ENCODE measurements at regions of chr1 and their contacts with region 1.

Region 1: DNA sequence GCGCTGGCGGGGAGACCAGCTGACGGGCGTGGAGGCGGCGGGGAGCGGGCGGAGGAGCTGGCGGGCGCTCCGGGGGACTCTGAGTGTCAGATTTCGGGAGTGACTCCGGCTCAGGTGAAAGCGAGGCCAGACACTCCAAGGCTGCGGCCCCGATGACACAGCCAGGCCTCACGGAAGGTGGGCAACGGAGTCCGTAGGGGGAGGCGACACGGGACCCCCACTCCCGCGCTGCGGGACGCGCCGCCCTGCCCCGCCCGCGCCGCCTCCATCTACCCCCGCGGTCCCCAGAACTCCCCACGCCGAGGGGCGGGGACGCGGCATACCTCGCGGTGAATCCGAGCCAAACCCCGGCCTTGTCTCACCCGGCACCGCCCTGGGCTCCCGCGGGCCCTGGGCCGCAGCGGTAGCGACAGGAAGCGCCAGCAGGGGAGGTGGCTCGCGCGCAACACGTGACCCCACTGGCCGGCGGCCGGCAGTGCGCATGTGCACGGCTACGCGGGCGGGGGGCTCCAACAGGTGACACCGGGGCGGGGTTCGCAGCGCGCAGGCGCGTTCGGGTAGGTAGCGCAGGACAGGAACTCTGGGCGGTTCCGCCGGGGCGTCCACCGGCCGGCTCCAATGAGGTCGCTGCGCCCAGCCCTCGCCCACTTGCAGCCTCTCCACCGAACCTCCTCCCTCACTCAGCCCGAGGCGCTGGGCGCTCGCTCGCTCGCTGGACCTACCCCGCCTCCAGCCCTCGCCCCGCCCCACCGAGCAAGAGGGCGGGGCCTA is at the start of gene CC2D1B:
- DNase-seq: peak; percentile 98 to 100 (median 100)
- H3K4me3 ChIP-seq: peak within 1 kb of the TSS; percentile 53 to 88
- H3K4me3 Mint-ChIP-seq: peak within 1 kb of the TSS; percentile 90 to 97 (median 92)
- H3K27ac ChIP-seq: peak within 1 kb of the TSS; percentile 78
- H3K27ac Mint-ChIP-seq: peak within 1 kb of the TSS; percentile 90 to 97 (median 95)
- H3K4me1 ChIP-seq: peaks cover 32% of the 10 kb centered on the region
- H3K4me1 Mint-ChIP-seq: peaks cover 20 to 56% (median 41%) of the 10 kb centered on the region in 4 donors
- H3K27me3 ChIP-seq: no peaks in the 10 kb centered on the region
- H3K27me3 Mint-ChIP-seq: no peaks in the 10 kb centered on the region
- total RNA-seq, gene CC2D1B: 83.7 to 84.1 TPM

Region 2: GRCh38 chr1:52033190-52034049 is 332.5 kb before region 1 on chr1 and contains the start of gene KTI12:
- CTCF ChIA-PET with region 1: no interaction called
- POLR2A ChIA-PET with region 1: interaction called, 5 read pairs
- intact Hi-C with region 1: loop called (anchors 5 kb)
- DNase-seq: peak; percentile 88 to 92 (median 90)
- H3K4me3 ChIP-seq: peak within 1 kb of the TSS; percentile 80 to 88
- H3K4me3 Mint-ChIP-seq: peak within 1 kb of the TSS; percentile 86 to 96 (median 93)
- H3K27ac ChIP-seq: peak within 1 kb of the TSS; percentile 81
- H3K27ac Mint-ChIP-seq: peak within 1 kb of the TSS; percentile 95 to 99 (median 96)
- H3K4me1 ChIP-seq: peaks cover 33% of the 10 kb centered on the region
- H3K4me1 Mint-ChIP-seq: peaks cover 31 to 45% (median 34%) of the 10 kb centered on the region in 4 donors
- H3K27me3 ChIP-seq: no peaks in the 10 kb centered on the region
- H3K27me3 Mint-ChIP-seq: no peaks in the 10 kb centered on the region
- total RNA-seq, gene KTI12: 14.0 to 15.6 TPM

Region 3: DNA sequence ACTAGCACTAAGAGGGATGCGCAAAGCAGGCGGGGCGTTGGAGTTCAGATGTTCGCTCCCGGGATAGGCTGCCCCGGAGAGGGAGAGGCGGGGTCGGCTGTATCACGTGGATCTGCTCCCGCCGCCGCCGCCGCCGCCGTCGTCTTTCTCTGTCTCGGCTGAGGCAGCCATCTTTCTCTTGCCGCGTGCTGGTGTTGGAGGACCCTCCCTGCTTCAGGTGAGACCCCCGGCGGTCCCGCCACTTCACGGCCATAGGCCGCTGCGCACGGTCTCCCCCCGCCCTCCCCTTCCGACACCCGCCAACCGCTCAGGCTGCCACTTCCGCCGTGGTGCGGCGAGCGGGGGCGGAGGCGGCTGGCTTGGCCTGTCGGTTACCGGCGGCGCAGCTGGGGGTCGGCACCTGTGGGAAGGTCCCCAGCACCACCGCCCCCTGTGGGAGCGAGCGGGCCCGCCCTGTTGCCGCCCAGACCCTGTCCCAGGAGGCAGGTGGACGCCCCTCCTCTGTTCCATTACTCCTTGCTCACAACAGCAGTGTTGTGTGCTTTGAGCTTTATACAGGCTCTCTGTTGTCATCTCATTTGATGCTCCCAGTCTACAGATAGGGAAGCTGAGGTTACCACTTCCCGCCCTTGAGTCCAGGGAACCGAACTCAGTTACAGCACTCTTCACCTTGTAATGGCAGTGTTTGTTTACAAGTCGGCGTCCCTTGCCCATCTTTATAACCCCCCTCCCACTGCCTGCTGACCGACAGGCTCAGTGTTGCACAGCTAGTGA is 309.6 kb before region 1 on chr1 and contains the start of gene BTF3L4:
- CTCF ChIA-PET with region 1: no interaction called
- POLR2A ChIA-PET with region 1: interaction called, 7 read pairs
- intact Hi-C with region 1: loop called (anchors 1 kb)
- DNase-seq: peak; percentile 89 to 97 (median 91)
- H3K4me3 ChIP-seq: peak within 1 kb of the TSS; percentile 81 to 92
- H3K4me3 Mint-ChIP-seq: peak within 1 kb of the TSS; percentile 98 to 100 (median 98)
- H3K27ac ChIP-seq: peak within 1 kb of the TSS; percentile 88
- H3K27ac Mint-ChIP-seq: peak within 1 kb of the TSS; percentile 84 to 98 (median 97)
- H3K4me1 ChIP-seq: peaks cover 56% of the 10 kb centered on the region
- H3K4me1 Mint-ChIP-seq: peaks cover 36 to 72% (median 57%) of the 10 kb centered on the region in 4 donors
- H3K27me3 ChIP-seq: no peaks in the 10 kb centered on the region
- H3K27me3 Mint-ChIP-seq: no peaks in the 10 kb centered on the region
- total RNA-seq, gene BTF3L4: 30.4 to 34.6 TPM

Region 4: DNA sequence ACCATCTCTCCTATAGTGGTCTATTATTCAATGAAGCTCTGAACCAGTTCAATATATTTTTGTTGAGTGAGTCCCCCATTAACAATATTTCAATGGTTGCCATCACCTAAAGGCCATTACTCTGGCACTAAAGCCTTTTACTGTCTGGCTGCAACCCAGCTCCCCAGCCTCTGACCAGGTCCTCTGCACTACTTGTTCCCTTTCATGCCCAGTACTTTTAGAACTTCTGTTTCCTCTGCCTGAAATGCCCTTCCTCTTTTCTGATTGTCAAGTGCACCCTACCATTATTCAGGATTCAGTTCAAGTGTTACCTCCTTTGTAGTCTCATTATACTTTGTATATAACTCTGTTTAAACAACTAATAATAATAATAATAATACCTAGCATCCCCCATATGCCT is 254.4 kb before region 1 on chr1:
- CTCF ChIA-PET with region 1: no interaction called
- POLR2A ChIA-PET with region 1: no interaction called
- intact Hi-C with region 1: no loop called
- DNase-seq: no peak
- H3K4me3 ChIP-seq: no peak overlapping the region
- H3K4me3 Mint-ChIP-seq: no peak overlapping the region
- H3K27ac ChIP-seq: no peak overlapping the region
- H3K27ac Mint-ChIP-seq: no peak overlapping the region
- H3K4me1 ChIP-seq: no peaks in the 10 kb centered on the region
- H3K4me1 Mint-ChIP-seq: no peaks in the 10 kb centered on the region
- H3K27me3 ChIP-seq: no peaks in the 10 kb centered on the region
- H3K27me3 Mint-ChIP-seq: no peaks in the 10 kb centered on the region

Region 5: GRCh38 chr1:52141513-52142219 is 224.3 kb before region 1 on chr1 and contains the start of gene ZFYVE9:
- CTCF ChIA-PET with region 1: interaction called, 3 read pairs
- POLR2A ChIA-PET with region 1: interaction called, 3 read pairs
- intact Hi-C with region 1: loop called (anchors 1 kb)
- DNase-seq: peak; percentile 61 to 76 (median 70)
- H3K4me3 ChIP-seq: peak within 1 kb of the TSS in 1 of 2 donors; percentile 55
- H3K4me3 Mint-ChIP-seq: peak within 1 kb of the TSS; percentile 87 to 94 (median 91)
- H3K27ac ChIP-seq: peak within 1 kb of the TSS; percentile 58
- H3K27ac Mint-ChIP-seq: peak within 1 kb of the TSS; percentile 53 to 94 (median 86)
- H3K4me1 ChIP-seq: peaks cover 43% of the 10 kb centered on the region
- H3K4me1 Mint-ChIP-seq: peaks cover 32 to 40% (median 35%) of the 10 kb centered on the region in 4 donors
- H3K27me3 ChIP-seq: no peaks in the 10 kb centered on the region
- H3K27me3 Mint-ChIP-seq: no peaks in the 10 kb centered on the region
- total RNA-seq, gene ZFYVE9: 11.0 to 12.8 TPM

Region 6: DNA sequence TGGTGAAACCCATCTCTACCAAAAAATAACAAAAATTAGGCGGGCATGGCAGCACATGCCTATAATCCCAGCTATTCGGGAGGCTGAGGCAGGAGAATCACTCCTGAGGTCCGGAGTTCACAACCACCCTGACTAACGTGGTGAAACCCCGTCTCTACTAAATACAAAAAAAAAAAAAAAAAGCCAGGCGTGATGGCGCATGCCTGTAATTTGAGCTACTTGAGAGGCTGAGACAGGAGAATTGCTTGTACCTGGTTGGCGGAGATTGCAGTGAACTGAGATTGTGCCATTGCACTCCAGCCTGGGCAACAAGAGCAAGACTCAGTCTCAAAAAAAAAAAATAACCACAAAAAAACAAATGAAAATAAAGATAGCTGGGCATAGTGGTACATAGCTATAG is 42.2 kb before region 1 on chr1:
- CTCF ChIA-PET with region 1: no interaction called
- POLR2A ChIA-PET with region 1: no interaction called
- intact Hi-C with region 1: no loop called
- DNase-seq: no peak
- H3K4me3 ChIP-seq: no peak overlapping the region
- H3K4me3 Mint-ChIP-seq: peak overlapping the region in 1 of 8 donors; percentile 27
- H3K27ac ChIP-seq: no peak overlapping the region
- H3K27ac Mint-ChIP-seq: no peak overlapping the region
- H3K4me1 ChIP-seq: no peaks in the 10 kb centered on the region
- H3K4me1 Mint-ChIP-seq: no peaks in the 10 kb centered on the region
- H3K27me3 ChIP-seq: no peaks in the 10 kb centered on the region
- H3K27me3 Mint-ChIP-seq: no peaks in the 10 kb centered on the region

Region 7: GRCh38 chr1:52404116-52404986 is 38.4 kb after region 1 on chr1 and contains the starts of genes ORC1 and PRPF38A:
- CTCF ChIA-PET with region 1: interaction called, 12 read pairs
- POLR2A ChIA-PET with region 1: interaction called, 68 read pairs
- intact Hi-C with region 1: loop called (anchors 1 kb)
- DNase-seq: peak; percentile 94 to 98 (median 96)
- H3K4me3 ChIP-seq: peak within 1 kb of the TSS; percentile 85 to 88
- H3K4me3 Mint-ChIP-seq: peak within 1 kb of the TSS; percentile 98 to 100 (median 100)
- H3K27ac ChIP-seq: peak within 1 kb of the TSS; percentile 91
- H3K27ac Mint-ChIP-seq: peak within 1 kb of the TSS; percentile 94 to 99 (median 99)
- H3K4me1 ChIP-seq: peaks cover 25% of the 10 kb centered on the region
- H3K4me1 Mint-ChIP-seq: peaks cover 22 to 44% (median 36%) of the 10 kb centered on the region in 4 donors
- H3K27me3 ChIP-seq: no peaks in the 10 kb centered on the region
- H3K27me3 Mint-ChIP-seq: no peaks in the 10 kb centered on the region
- total RNA-seq, gene ORC1: 1.1 to 1.5 TPM
- total RNA-seq, gene PRPF38A: 69.7 to 70.4 TPM

Region 8: GRCh38 chr1:52424231-52424636 is 58.3 kb after region 1 on chr1:
- CTCF ChIA-PET with region 1: no interaction called
- POLR2A ChIA-PET with region 1: interaction called, 18 read pairs
- intact Hi-C with region 1: loop called (anchors 1 kb)
- DNase-seq: peak; percentile 65 to 86 (median 71)
- H3K4me3 ChIP-seq: peak overlapping the region in 1 of 2 donors; percentile 4
- H3K4me3 Mint-ChIP-seq: peak overlapping the region; percentile 66 to 83 (median 74)
- H3K27ac ChIP-seq: peak overlapping the region; percentile 53
- H3K27ac Mint-ChIP-seq: peak overlapping the region; percentile 91 to 99 (median 94)
- H3K4me1 ChIP-seq: peaks cover 57% of the 10 kb centered on the region
- H3K4me1 Mint-ChIP-seq: peaks cover 38 to 49% (median 46%) of the 10 kb centered on the region in 4 donors
- H3K27me3 ChIP-seq: no peaks in the 10 kb centered on the region
- H3K27me3 Mint-ChIP-seq: no peaks in the 10 kb centered on the region

Region 9: GRCh38 chr1:52552505-52553361 is 186.8 kb after region 1 on chr1 and contains the start of gene TUT4:
- CTCF ChIA-PET with region 1: no interaction called
- POLR2A ChIA-PET with region 1: interaction called, 3 read pairs
- intact Hi-C with region 1: loop called (anchors 2 kb)
- DNase-seq: peak; percentile 67 to 83 (median 73)
- H3K4me3 ChIP-seq: peak within 1 kb of the TSS; percentile 68 to 95
- H3K4me3 Mint-ChIP-seq: peak within 1 kb of the TSS in 7 of 8 donors; percentile 48 to 87 (median 77)
- H3K27ac ChIP-seq: peak within 1 kb of the TSS; percentile 92
- H3K27ac Mint-ChIP-seq: peak within 1 kb of the TSS; percentile 57 to 91 (median 83)
- H3K4me1 ChIP-seq: peaks cover 41% of the 10 kb centered on the region
- H3K4me1 Mint-ChIP-seq: peaks cover 25 to 41% (median 33%) of the 10 kb centered on the region in 4 donors
- H3K27me3 ChIP-seq: no peaks in the 10 kb centered on the region
- H3K27me3 Mint-ChIP-seq: no peaks in the 10 kb centered on the region
- total RNA-seq, gene TUT4: 151 to 159 TPM

Measured in CD4-positive, alpha-beta memory T cell (primary cell).